ENCODE measurements at regions of chr1 and their contacts with region 1.

Region 1: DNA sequence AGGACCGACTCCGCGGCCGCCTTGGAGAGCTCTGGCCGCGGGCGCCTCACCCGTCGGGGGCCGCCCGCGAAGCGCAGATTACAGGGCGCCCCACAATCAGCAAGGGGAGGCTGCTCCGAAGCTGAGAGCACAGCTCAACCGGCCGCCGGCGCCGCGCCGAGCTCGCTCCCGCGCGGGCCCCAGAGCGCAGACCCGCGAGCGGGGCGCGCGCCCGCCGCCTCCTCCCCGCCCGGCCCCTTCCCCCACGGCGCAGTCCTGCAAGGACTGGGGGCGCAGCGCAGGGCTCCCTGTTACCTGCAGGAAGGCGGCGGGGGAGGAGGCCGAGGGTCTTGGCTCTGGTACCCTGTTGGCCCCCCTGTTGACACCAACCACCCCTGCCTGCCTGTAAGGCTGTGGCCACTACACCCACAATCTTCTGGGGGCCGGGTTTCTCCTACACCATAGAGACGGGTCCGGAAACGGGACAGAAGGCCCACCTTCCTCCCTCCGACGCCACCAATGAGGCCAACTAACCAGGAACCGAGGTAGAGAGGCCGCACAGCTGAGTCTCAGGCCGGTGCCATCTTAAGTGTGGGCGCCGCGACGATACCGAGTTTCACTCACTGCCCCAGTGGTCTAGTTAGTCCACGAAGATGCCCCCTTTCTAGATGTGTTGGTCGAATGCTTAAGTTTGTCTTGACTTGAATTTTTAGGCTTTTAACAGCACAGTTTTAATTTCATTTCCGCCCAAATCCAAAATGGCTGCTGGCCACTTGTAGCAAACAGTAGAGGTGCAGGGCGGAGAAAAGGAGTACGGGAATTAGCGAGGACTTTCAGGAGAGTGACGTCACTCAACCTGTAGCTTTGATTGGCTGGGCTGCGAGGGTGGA is at the start of gene SCYL3:
- DNase-seq: peak; percentile 75 to 97 (median 89)
- ATAC-seq: peak; percentile 83
- H3K4me3 ChIP-seq: peak within 1 kb of the TSS; percentile 80 to 82
- H3K4me3 Mint-ChIP-seq: peak within 1 kb of the TSS; percentile 89
- H3K27ac ChIP-seq: peak within 1 kb of the TSS; percentile 98 to 99
- H3K27ac Mint-ChIP-seq: peak within 1 kb of the TSS; percentile 99
- H3K4me1 ChIP-seq: peaks cover 35% of the 10 kb centered on the region
- H3K4me1 Mint-ChIP-seq: peaks cover 46% of the 10 kb centered on the region
- H3K27me3 ChIP-seq: no peaks in the 10 kb centered on the region
- H3K27me3 Mint-ChIP-seq: no peaks in the 10 kb centered on the region
- CTCF ChIP-seq: no peak
- total RNA-seq, gene SCYL3: 3.3 to 3.7 TPM

Region 2: GRCh38 chr1:167936068-167936929 is 1957.4 kb before region 1 on chr1 and contains the start of gene DCAF6:
- CTCF ChIA-PET with region 1: no interaction called
- POLR2A ChIA-PET with region 1: interaction called, 3 read pairs
- intact Hi-C with region 1: loop called (anchors 5 kb)
- DNase-seq: peak; percentile 93 to 100 (median 97)
- ATAC-seq: peak; percentile 78
- H3K4me3 ChIP-seq: peak within 1 kb of the TSS; percentile 85 to 86
- H3K4me3 Mint-ChIP-seq: peak within 1 kb of the TSS; percentile 89
- H3K27ac ChIP-seq: peak within 1 kb of the TSS; percentile 91 to 96
- H3K27ac Mint-ChIP-seq: peak within 1 kb of the TSS; percentile 93
- H3K4me1 ChIP-seq: peaks cover 29% of the 10 kb centered on the region
- H3K4me1 Mint-ChIP-seq: peaks cover 54% of the 10 kb centered on the region
- H3K27me3 ChIP-seq: no peaks in the 10 kb centered on the region
- H3K27me3 Mint-ChIP-seq: no peaks in the 10 kb centered on the region
- CTCF ChIP-seq: no peak
- total RNA-seq, gene DCAF6: 12.4 to 13.0 TPM

Region 3: DNA sequence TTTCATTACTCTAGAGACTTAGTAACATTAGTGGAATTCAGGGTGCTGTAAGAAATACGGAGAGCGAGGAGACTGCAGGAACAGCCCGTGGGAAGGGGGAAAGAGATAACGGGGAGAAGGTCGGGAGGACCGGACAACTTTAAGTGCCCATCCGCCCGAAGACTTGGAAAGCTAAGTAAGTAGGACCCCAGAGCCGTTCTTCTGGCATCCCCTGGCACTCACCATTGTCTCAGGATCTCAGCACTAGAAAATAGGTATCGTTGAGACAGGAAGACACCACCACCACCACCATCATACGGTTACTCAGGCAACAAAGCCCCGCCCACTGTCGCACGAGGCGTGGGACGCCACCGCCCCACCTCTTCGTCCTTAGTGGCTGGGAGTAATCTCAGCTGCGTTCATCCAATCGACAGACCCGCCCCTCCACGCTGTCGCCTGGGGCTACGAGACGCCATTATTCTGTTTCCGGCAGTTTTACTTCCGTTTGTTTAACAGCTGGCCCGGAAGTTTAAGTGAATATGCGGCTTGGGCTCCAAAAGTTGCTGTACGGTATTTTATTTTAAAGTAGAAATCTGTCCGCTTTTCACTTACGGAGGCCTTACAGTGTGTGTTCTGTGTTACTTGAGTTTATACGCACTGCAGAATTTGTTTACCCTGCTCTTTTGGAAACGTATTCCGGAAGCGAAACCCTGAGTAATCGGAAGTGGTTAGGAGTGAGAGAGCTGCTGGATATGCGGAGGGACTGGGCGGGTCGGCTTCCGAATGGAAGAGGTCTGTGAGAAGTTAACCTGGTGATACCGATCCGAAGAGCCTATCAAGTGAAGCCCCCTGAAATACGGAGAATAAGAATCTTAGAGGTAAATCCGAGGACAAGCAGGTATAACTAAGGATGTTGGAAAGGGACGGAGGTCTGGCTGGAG is 526.0 kb before region 1 on chr1 and contains the starts of genes BLZF1 and NME7:
- CTCF ChIA-PET with region 1: no interaction called
- POLR2A ChIA-PET with region 1: interaction called, 4 read pairs
- intact Hi-C with region 1: loop called (anchors 1 to 5 kb)
- DNase-seq: peak; percentile 96 to 99 (median 98)
- ATAC-seq: peak; percentile 93
- H3K4me3 ChIP-seq: peak within 1 kb of the TSS; percentile 84 to 94
- H3K4me3 Mint-ChIP-seq: peak within 1 kb of the TSS; percentile 51
- H3K27ac ChIP-seq: peak within 1 kb of the TSS; percentile 88 to 97
- H3K27ac Mint-ChIP-seq: peak within 1 kb of the TSS; percentile 32
- H3K4me1 ChIP-seq: peaks cover 23% of the 10 kb centered on the region
- H3K4me1 Mint-ChIP-seq: peaks cover 49% of the 10 kb centered on the region
- H3K27me3 ChIP-seq: no peaks in the 10 kb centered on the region
- H3K27me3 Mint-ChIP-seq: no peaks in the 10 kb centered on the region
- CTCF ChIP-seq: no peak
- total RNA-seq, gene BLZF1: 11.1 to 13.6 TPM
- total RNA-seq, gene NME7: 5.3 to 7.7 TPM

Region 4: DNA sequence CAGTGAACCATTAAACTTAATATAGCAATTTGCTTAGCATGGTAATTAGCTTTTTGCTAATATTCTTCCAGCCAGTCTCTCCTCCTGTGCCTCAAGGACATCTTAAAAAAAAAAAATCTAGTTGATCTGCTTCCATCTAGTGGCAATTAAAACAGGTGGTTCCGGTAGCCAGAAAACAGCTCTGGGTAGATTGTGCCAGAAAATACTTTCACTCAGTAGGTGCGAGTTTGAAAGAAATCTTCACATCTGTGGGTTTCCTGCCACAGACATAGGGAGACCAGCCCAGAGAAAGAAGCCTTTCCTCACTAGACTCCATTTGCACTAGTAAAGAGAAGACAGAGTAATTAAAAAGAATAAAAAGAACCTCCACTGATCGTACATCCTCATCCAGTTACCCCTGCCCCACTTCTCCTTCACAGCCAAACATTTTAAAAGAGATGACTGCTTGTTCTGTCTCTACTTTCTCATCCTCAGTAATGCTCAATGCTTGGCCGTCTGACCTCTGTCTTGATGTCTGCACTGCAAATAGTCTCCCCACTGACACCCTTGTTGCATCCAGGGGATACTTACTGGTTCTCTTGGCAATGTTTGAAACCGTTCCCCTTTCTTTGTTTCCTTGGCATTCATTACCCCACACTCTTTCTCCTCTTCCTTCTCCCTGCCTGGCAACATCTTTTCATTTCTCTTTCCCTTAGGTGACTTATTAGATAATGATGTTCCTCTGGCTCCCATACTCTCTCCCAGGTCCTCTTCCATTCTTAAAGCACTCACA is 199.2 kb before region 1 on chr1:
- CTCF ChIA-PET with region 1: no interaction called
- POLR2A ChIA-PET with region 1: interaction called, 6 read pairs
- intact Hi-C with region 1: loop called in 1 of 2 experiments (anchors 5 kb)
- DNase-seq: peak in 7 of 9 experiments; percentile 19 to 88 (median 58)
- ATAC-seq: peak; percentile 59
- H3K4me3 ChIP-seq: no peak overlapping the region
- H3K4me3 Mint-ChIP-seq: peak overlapping the region; percentile 60
- H3K27ac ChIP-seq: peak overlapping the region; percentile 50 to 74
- H3K27ac Mint-ChIP-seq: no peak overlapping the region
- H3K4me1 ChIP-seq: peaks cover 96% of the 10 kb centered on the region
- H3K4me1 Mint-ChIP-seq: peaks cover 71% of the 10 kb centered on the region
- H3K27me3 ChIP-seq: no peaks in the 10 kb centered on the region
- H3K27me3 Mint-ChIP-seq: no peaks in the 10 kb centered on the region
- CTCF ChIP-seq: peak; percentile 50

Region 5: GRCh38 chr1:170531758-170532657 is 638.3 kb after region 1 on chr1 and contains the start of gene GORAB:
- CTCF ChIA-PET with region 1: no interaction called
- POLR2A ChIA-PET with region 1: no interaction called
- intact Hi-C with region 1: loop called (anchors 1 to 2 kb)
- DNase-seq: peak; percentile 72 to 93 (median 85)
- ATAC-seq: peak; percentile 90
- H3K4me3 ChIP-seq: peak within 1 kb of the TSS; percentile 73 to 86
- H3K4me3 Mint-ChIP-seq: no peak within 1 kb of the TSS
- H3K27ac ChIP-seq: peak within 1 kb of the TSS; percentile 80 to 91
- H3K27ac Mint-ChIP-seq: no peak within 1 kb of the TSS
- H3K4me1 ChIP-seq: peaks cover 14% of the 10 kb centered on the region
- H3K4me1 Mint-ChIP-seq: peaks cover 22% of the 10 kb centered on the region
- H3K27me3 ChIP-seq: no peaks in the 10 kb centered on the region
- H3K27me3 Mint-ChIP-seq: no peaks in the 10 kb centered on the region
- CTCF ChIP-seq: no peak
- total RNA-seq, gene GORAB: 24.8 to 26.1 TPM

Region 6: GRCh38 chr1:171741872-171742576 is 1848.3 kb after region 1 on chr1 and contains the start of gene VAMP4:
- CTCF ChIA-PET with region 1: no interaction called
- POLR2A ChIA-PET with region 1: no interaction called
- intact Hi-C with region 1: loop called (anchors 5 to 10 kb)
- DNase-seq: peak; percentile 72 to 93 (median 85)
- ATAC-seq: peak; percentile 87
- H3K4me3 ChIP-seq: peak within 1 kb of the TSS; percentile 94 to 99
- H3K4me3 Mint-ChIP-seq: peak within 1 kb of the TSS; percentile 100
- H3K27ac ChIP-seq: peak within 1 kb of the TSS; percentile 96 to 99
- H3K27ac Mint-ChIP-seq: peak within 1 kb of the TSS; percentile 100
- H3K4me1 ChIP-seq: peaks cover 39% of the 10 kb centered on the region
- H3K4me1 Mint-ChIP-seq: peaks cover 51% of the 10 kb centered on the region
- H3K27me3 ChIP-seq: no peaks in the 10 kb centered on the region
- H3K27me3 Mint-ChIP-seq: no peaks in the 10 kb centered on the region
- CTCF ChIP-seq: no peak
- total RNA-seq, gene VAMP4: 8.4 to 8.6 TPM